ENCODE measurements at regions of chr22 and their contacts with region 1.

Region 1: DNA sequence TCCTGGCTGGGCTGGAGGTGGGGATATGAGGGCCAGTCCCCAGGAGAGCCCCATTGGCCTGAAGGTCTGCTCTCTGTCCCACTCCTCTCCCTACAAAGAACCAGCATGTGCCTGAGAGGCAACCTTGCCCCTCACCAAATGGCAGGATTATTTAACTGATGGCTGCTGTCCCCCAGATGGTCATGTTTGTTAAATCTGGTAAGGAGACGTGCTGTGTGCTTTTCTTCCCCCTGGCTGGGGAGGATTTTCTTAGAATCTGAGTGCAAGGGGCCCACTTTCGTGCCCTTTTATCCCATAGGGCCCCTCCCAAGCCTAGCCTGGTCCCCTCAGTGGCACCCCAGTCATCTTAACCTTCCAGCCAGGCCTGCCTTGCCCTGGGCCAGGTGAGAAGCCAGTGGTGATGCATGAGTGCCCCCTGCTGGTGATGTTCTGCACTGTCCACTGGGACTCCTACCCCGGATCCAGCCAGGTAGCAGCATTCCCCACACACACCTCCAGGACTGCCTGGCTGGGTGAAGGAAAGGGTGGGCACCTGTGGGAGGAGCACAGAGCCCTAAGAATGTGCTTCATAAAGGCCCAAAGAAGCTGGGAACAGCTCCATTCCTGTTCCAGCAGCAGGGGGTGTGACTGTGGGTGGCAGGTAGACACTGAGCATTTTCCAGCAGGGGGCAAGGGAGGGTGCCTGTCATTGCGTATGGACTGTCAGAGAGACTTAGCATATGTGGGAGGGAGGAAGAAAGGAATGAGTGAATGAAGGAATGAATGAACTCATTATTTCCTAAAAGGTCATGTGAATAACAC is 28.9 kb downstream of the MFNG start:
- DNase-seq: peak; percentile 89
- ATAC-seq: peak; percentile 98
- H3K4me3 Mint-ChIP-seq: no peak overlapping the region
- H3K27ac Mint-ChIP-seq: no peak overlapping the region
- H3K4me1 Mint-ChIP-seq: peaks cover 5% of the 10 kb centered on the region
- H3K27me3 Mint-ChIP-seq: no peaks in the 10 kb centered on the region

Region 2: DNA sequence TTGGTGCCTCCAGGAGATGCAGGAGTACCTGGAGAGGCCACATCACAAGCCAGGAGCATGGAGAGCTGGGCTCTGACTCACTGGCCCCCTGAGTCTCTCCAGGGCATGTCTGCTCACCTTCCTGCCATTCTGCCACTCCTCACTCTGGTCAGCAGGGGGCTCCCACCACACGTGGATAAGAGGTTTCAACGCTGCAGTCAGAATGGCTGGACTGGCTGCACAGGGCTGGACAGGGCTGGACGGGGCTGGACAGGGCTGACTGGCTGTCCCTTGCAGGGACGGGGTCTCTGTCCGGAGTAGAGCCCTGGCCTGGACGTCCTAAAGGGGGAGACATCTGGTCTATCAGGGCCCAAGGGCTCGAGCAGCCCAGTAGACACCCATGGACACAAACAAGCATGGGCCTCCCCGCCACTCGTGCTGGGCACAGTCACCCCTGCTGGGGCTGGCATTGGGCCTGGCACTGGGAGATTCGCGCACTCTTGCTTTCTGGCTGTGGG is 140.4 kb before region 1 on chr22:
- CTCF ChIA-PET with region 1: interaction called, 65 read pairs
- POLR2A ChIA-PET with region 1: interaction called, 3 read pairs
- DNase-seq: peak; percentile 84
- ATAC-seq: peak; percentile 85
- H3K4me3 Mint-ChIP-seq: no peak overlapping the region
- H3K27ac Mint-ChIP-seq: peak overlapping the region; percentile 30
- H3K4me1 Mint-ChIP-seq: peaks cover 47% of the 10 kb centered on the region
- H3K27me3 Mint-ChIP-seq: peaks cover 7% of the 10 kb centered on the region

Region 3: GRCh38 chr22:37472418-37473006 is 15.2 kb after region 1 on chr22:
- CTCF ChIA-PET with region 1: interaction called, 13 read pairs
- POLR2A ChIA-PET with region 1: no interaction called
- DNase-seq: peak; percentile 51
- ATAC-seq: peak; percentile 56
- H3K4me3 Mint-ChIP-seq: no peak overlapping the region
- H3K27ac Mint-ChIP-seq: peak overlapping the region; percentile 57
- H3K4me1 Mint-ChIP-seq: peaks cover 20% of the 10 kb centered on the region
- H3K27me3 Mint-ChIP-seq: no peaks in the 10 kb centered on the region

Region 4: GRCh38 chr22:37486224-37486845 is 29.0 kb after region 1 on chr22 and contains the start of gene MFNG:
- CTCF ChIA-PET with region 1: interaction called, 14 read pairs
- POLR2A ChIA-PET with region 1: no interaction called
- DNase-seq: peak; percentile 81
- ATAC-seq: peak; percentile 62
- H3K4me3 Mint-ChIP-seq: peak within 1 kb of the TSS; percentile 88
- H3K27ac Mint-ChIP-seq: peak within 1 kb of the TSS; percentile 97
- H3K4me1 Mint-ChIP-seq: peaks cover 69% of the 10 kb centered on the region
- H3K27me3 Mint-ChIP-seq: no peaks in the 10 kb centered on the region
- total RNA-seq, gene MFNG: 227 to 232 TPM

Region 5: DNA sequence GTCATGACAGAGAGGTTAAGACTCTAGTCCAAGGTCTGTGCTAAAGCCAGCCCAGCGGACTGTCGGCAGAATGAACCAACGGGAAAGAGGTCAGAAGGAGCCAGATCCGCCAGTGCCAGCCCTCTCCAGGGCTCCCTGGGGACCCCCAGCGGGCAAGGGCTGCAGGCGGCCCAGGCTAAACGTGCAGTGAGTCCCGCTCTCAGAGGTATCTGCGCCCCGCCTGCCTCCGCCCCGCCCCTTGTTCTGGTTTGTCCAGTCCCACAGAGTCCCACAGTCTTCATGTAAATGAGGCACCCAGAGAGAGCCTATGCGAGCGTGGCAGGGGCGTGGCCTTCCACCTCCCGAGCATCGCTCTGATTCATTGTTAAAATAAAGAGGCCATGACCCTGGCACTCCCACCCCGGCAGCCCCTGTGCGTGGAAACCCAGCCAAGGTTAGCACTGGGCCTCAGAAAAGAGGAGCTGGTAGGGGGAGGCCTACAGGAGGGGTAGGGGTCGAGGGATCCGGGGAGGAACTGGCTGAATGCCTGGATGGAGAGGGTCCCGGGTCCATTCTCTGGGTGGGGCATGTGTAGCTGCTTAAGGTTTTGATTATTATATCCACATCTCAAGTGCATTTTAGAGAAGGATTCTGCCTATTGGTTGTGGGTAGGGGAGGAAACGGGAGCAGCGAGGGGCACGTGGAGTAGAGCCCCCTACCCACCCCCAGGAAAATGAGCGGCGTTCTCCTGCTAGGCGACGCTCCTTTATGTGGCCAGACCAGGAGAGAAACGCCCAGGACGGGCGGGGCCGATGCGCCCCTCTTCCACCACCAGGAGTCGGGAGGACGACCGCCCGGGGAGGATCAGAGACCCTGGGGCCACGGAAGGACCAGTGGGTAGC is 239.6 kb after region 1 on chr22 and contains the start of gene TRIOBP:
- CTCF ChIA-PET with region 1: no interaction called
- POLR2A ChIA-PET with region 1: no interaction called
- DNase-seq: peak; percentile 93
- ATAC-seq: peak; percentile 100
- H3K4me3 Mint-ChIP-seq: peak within 1 kb of the TSS; percentile 52
- H3K27ac Mint-ChIP-seq: peak within 1 kb of the TSS; percentile 10
- H3K4me1 Mint-ChIP-seq: peaks cover 27% of the 10 kb centered on the region
- H3K27me3 Mint-ChIP-seq: no peaks in the 10 kb centered on the region
- total RNA-seq, gene TRIOBP: 45.2 to 45.8 TPM

Region 6: DNA sequence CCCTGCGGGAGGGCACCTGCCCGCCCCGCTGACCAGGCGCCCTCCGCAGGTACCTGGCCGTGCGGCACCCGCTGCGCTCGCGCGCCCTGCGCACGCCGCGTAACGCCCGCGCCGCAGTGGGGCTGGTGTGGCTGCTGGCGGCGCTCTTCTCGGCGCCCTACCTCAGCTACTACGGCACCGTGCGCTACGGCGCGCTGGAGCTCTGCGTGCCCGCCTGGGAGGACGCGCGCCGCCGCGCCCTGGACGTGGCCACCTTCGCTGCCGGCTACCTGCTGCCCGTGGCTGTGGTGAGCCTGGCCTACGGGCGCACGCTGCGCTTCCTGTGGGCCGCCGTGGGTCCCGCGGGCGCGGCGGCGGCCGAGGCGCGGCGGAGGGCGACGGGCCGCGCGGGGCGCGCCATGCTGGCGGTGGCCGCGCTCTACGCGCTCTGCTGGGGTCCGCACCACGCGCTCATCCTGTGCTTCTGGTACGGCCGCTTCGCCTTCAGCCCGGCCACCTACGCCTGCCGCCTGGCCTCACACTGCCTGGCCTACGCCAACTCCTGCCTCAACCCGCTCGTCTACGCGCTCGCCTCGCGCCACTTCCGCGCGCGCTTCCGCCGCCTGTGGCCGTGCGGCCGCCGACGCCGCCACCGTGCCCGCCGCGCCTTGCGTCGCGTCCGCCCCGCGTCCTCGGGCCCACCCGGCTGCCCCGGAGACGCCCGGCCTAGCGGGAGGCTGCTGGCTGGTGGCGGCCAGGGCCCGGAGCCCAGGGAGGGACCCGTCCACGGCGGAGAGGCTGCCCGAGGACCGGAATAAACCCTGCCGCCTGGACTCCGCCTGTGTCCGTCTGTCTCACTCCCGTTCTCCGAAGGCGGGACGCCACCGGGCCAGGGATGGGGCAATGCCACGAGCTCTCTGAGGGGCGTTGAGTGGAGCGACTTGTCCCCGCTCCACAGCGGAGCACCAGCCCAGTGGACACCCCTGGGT is 367.7 kb after region 1 on chr22:
- CTCF ChIA-PET with region 1: no interaction called
- POLR2A ChIA-PET with region 1: no interaction called
- DNase-seq: peak; percentile 40
- ATAC-seq: peak; percentile 69
- H3K4me3 Mint-ChIP-seq: peak overlapping the region; percentile 72
- H3K27ac Mint-ChIP-seq: peak overlapping the region; percentile 75
- H3K4me1 Mint-ChIP-seq: peaks cover 9% of the 10 kb centered on the region
- H3K27me3 Mint-ChIP-seq: peaks cover 22% of the 10 kb centered on the region